WTC11 (cell line): ENCODE measurements at regions of chr10 and their contacts with region 1.

Region 1: DNA sequence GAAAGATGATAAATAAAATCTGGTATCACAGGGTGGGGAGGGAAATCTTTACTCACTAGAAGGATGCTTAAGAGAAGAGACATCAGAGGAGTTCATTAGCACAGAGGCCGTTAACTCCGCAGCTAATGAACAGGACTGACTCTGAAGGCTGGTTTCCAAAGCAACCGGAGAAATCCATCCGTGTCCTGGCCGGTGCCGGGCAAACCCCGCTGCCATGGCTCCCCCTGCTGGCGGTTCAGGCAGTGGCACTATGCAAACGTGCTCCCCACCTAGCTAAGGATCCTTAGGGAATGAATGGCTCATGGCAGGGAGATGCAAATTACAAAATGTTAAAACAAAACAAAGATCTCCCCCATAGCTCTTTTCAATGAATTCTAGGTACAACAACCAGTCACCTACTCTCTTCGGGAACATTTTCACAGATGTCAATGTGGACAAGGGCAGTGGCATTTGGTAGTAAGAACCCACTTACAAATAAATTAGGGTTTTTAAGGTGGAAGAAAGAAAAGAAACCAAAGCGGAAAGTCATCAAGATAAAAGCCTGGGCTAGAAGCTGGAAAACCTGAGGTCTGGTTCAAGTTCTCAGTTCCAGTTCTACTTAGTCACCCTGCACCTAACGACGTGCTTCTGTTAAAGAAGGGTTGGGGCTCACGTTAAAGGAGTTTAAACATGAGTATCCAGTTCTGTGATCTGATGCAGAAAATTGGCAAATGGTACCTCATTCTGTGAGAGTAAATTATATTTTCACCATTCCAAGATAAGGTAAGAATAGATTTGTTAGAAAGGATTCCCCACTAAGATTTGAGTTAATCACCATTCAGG is 138.2 kb downstream of the SVIL start:
- DNase-seq: peak; percentile 94
- ATAC-seq: peak; percentile 99
- H3K4me3 Mint-ChIP-seq: no peak overlapping the region
- H3K27ac Mint-ChIP-seq: peak overlapping the region; percentile 93
- H3K4me1 Mint-ChIP-seq: peaks cover 22% of the 10 kb centered on the region
- H3K27me3 Mint-ChIP-seq: no peaks in the 10 kb centered on the region
- CTCF ChIP-seq: peak; percentile 72

Region 2: DNA sequence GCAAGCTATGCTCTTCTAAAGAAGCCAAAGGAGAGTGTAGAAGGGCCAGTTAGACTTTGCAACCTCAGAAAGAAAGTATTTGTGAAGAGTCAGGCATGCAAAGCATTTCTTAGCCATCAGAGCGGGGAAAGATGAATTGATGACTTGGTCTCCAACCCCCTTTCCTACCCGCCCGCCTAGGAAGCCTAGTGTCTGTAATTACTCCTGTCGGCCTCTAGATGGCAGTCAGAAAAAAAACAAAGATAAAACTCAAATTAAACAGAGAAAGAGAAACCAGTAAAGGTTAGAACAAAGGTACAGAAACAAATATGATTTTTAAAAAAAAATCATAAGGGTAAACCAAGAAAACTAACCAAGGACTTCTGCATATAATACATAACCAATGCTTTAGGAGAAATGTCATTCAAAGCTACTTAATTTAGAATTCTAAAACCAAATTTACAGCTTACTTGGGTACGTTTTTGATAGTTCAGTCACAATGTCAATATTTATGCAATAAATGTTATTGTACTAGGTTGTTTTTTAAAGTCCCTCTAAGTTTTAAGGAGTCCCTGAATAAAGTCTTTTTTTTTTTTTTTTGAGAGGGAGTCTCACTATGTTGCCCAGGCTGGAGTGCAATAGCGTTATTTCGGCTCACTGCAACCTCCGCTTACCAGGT is 110.1 kb before region 1 on chr10:
- CTCF ChIA-PET with region 1: no interaction called
- POLR2A ChIA-PET with region 1: no interaction called
- DNase-seq: no peak
- ATAC-seq: peak; percentile 71
- H3K4me3 Mint-ChIP-seq: no peak overlapping the region
- H3K27ac Mint-ChIP-seq: no peak overlapping the region
- H3K4me1 Mint-ChIP-seq: peaks cover 2% of the 10 kb centered on the region; the same call in 1 of the 2 replicates
- H3K27me3 Mint-ChIP-seq: peaks cover 21% of the 10 kb centered on the region
- CTCF ChIP-seq: peak; percentile 58

Region 3: GRCh38 chr10:29415876-29416275 is 80.7 kb before region 1 on chr10:
- CTCF ChIA-PET with region 1: no interaction called
- POLR2A ChIA-PET with region 1: no interaction called
- DNase-seq: no peak
- ATAC-seq: no peak
- H3K4me3 Mint-ChIP-seq: no peak overlapping the region
- H3K27ac Mint-ChIP-seq: no peak overlapping the region
- H3K4me1 Mint-ChIP-seq: no peaks in the 10 kb centered on the region
- H3K27me3 Mint-ChIP-seq: no peaks in the 10 kb centered on the region
- CTCF ChIP-seq: no peak

Region 4: DNA sequence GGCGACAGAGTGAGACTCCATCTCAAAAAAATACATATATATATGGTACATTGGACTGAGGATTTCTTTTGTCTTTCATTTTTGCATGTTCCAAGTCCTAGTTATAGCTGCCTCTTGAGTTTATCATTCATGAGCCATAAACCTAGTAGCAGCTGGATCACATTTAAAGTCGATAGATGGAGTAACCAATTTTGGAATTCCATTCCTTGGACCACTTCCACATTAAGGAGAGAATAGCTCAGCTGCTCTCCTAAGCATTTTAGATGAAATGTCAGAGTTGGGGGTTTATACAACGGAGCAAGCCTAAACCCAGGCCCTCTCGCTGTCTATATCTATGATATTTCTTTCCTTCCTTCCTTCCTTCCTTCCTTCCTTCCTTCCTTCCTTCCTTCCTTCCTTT is 66.5 kb before region 1 on chr10:
- CTCF ChIA-PET with region 1: interaction called, 11 read pairs
- POLR2A ChIA-PET with region 1: no interaction called
- DNase-seq: no peak
- ATAC-seq: no peak
- H3K4me3 Mint-ChIP-seq: no peak overlapping the region
- H3K27ac Mint-ChIP-seq: no peak overlapping the region
- H3K4me1 Mint-ChIP-seq: no peaks in the 10 kb centered on the region
- H3K27me3 Mint-ChIP-seq: peaks cover 3% of the 10 kb centered on the region; the same call in 1 of the 2 replicates
- CTCF ChIP-seq: no peak

Region 5: DNA sequence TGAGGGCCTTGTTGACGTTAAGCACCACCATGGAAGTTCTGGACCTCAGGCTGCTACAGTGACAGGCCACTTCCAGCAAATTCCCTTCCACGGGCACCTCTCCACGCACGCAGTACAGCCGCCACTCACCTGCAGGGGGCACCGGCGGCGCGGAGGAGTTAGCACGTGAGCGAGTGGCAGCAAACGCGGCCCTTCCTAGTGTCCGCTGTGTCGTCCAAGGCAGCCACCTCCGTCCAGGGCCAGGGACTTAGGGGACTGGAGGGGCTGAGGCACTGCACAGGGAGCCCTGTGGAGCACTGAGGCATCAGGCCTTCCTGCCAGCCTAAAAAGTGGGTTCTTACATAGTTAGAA is 26.2 kb before region 1 on chr10:
- CTCF ChIA-PET with region 1: interaction called, 12 read pairs
- POLR2A ChIA-PET with region 1: no interaction called
- DNase-seq: peak; percentile 79
- ATAC-seq: peak; percentile 87
- H3K4me3 Mint-ChIP-seq: no peak overlapping the region
- H3K27ac Mint-ChIP-seq: 0 out of 2 replicates have a peak overlapping the region, but pooled peaks have one; percentile 1
- H3K4me1 Mint-ChIP-seq: peaks cover 28% of the 10 kb centered on the region
- H3K27me3 Mint-ChIP-seq: no peaks in the 10 kb centered on the region
- CTCF ChIP-seq: peak; percentile 56

Region 6: DNA sequence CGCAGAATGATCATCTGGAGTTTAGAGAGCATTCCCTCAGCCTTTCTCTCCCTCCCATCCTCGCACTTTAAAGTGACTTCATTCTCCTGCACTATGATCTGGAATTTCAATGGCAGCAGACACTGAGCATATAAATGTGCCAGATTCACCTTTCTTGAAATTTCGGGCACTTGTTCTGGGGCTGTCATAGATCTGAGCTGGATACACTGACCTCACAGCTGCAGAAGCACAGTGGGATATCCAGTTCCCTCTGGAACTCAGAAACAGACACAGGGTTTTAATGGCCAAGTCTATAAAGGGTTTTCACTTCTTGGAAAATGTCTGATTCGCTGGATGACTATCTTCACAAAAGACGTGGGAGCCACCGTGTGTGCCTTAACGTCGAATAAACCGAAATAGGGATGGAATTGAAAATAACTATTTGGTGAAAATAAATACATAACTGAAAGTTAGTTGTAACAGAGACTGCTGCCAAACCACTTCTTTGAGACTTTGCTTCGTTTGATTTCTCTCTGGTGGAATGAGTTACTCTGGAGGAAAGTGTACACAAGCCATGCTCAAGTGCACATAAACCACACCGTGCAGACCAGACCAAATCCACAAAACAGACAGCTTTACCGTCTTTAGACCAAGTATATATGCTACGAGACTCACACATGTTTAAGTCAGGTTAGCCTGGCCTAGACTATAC is 12.1 kb after region 1 on chr10:
- CTCF ChIA-PET with region 1: interaction called, 20 read pairs
- POLR2A ChIA-PET with region 1: no interaction called
- DNase-seq: no peak
- ATAC-seq: no peak
- H3K4me3 Mint-ChIP-seq: no peak overlapping the region
- H3K27ac Mint-ChIP-seq: peak overlapping the region; percentile 10; the same call in 1 of the 2 replicates
- H3K4me1 Mint-ChIP-seq: peaks cover 11% of the 10 kb centered on the region
- H3K27me3 Mint-ChIP-seq: no peaks in the 10 kb centered on the region
- CTCF ChIP-seq: no peak

Region 7: GRCh38 chr10:29535012-29535777 is 38.6 kb after region 1 on chr10:
- CTCF ChIA-PET with region 1: interaction called, 33 read pairs
- POLR2A ChIA-PET with region 1: no interaction called
- DNase-seq: peak; percentile 80
- ATAC-seq: peak; percentile 89
- H3K4me3 Mint-ChIP-seq: no peak overlapping the region
- H3K27ac Mint-ChIP-seq: no peak overlapping the region
- H3K4me1 Mint-ChIP-seq: peaks cover 49% of the 10 kb centered on the region
- H3K27me3 Mint-ChIP-seq: no peaks in the 10 kb centered on the region
- CTCF ChIP-seq: peak; percentile 75